ENCODE measurements at regions of chr16 and their contacts with region 1.

Region 1: GRCh38 chr16:11356573-11357331 is 11.5 kb downstream of the RMI2 start:
- DNase-seq: peak; percentile 78
- H3K4me3 Mint-ChIP-seq: no peak overlapping the region
- H3K27ac Mint-ChIP-seq: peak overlapping the region; percentile 28
- H3K4me1 Mint-ChIP-seq: peaks cover 63% of the 10 kb centered on the region
- H3K27me3 Mint-ChIP-seq: no peaks in the 10 kb centered on the region

Region 2: DNA sequence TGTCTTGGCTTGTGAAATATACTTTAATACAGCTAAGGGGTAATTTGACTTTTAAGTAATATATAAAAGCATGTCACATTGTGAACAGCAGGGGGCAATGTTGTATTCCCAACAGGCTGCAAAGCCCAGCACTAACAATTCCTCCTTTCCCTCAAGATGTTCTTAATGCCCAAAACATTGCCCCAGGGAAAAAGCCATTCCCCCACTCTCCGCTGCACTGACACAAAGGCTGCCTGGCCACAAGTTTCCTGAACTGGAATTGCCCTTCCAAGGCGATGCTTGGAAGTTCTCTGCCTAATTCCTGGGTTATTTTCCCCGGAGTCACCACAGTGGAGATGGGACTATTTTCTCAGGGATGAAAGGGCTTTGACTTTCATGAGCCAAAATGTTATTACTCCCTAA is 385.2 kb before region 1 on chr16:
- CTCF ChIA-PET with region 1: interaction called, 16 read pairs
- intact Hi-C with region 1: loop called (anchors 1 kb)
- DNase-seq: peak; percentile 62
- H3K4me3 Mint-ChIP-seq: no peak overlapping the region
- H3K27ac Mint-ChIP-seq: no peak overlapping the region
- H3K4me1 Mint-ChIP-seq: peaks cover 22% of the 10 kb centered on the region
- H3K27me3 Mint-ChIP-seq: no peaks in the 10 kb centered on the region

Region 3: GRCh38 chr16:11224096-11224893 is 132.5 kb before region 1 on chr16:
- CTCF ChIA-PET with region 1: interaction called, 4 read pairs
- intact Hi-C with region 1: loop called (anchors 2 kb)
- DNase-seq: peak; percentile 86
- H3K4me3 Mint-ChIP-seq: peak overlapping the region; percentile 35
- H3K27ac Mint-ChIP-seq: peak overlapping the region; percentile 96
- H3K4me1 Mint-ChIP-seq: peaks cover 51% of the 10 kb centered on the region
- H3K27me3 Mint-ChIP-seq: no peaks in the 10 kb centered on the region

Region 4: GRCh38 chr16:11297492-11298142 is 59.1 kb before region 1 on chr16:
- CTCF ChIA-PET with region 1: interaction called, 3 read pairs
- intact Hi-C with region 1: loop called (anchors 2 kb)
- DNase-seq: peak; percentile 78
- H3K4me3 Mint-ChIP-seq: peak overlapping the region; percentile 49
- H3K27ac Mint-ChIP-seq: peak overlapping the region; percentile 0
- H3K4me1 Mint-ChIP-seq: peaks cover 27% of the 10 kb centered on the region
- H3K27me3 Mint-ChIP-seq: no peaks in the 10 kb centered on the region

Region 5: GRCh38 chr16:11345040-11345862 is 11.5 kb before region 1 on chr16 and contains the start of gene RMI2:
- CTCF ChIA-PET with region 1: interaction called, 9 read pairs
- intact Hi-C with region 1: loop called (anchors 1 kb)
- DNase-seq: peak; percentile 98
- H3K4me3 Mint-ChIP-seq: peak within 1 kb of the TSS; percentile 90
- H3K27ac Mint-ChIP-seq: peak within 1 kb of the TSS; percentile 83
- H3K4me1 Mint-ChIP-seq: peaks cover 46% of the 10 kb centered on the region
- H3K27me3 Mint-ChIP-seq: no peaks in the 10 kb centered on the region
- total RNA-seq, gene RMI2: 82.8 to 86.2 TPM

Region 6: GRCh38 chr16:11386791-11387546 is 30.2 kb after region 1 on chr16:
- CTCF ChIA-PET with region 1: no interaction called
- intact Hi-C with region 1: no loop called
- DNase-seq: no peak
- H3K4me3 Mint-ChIP-seq: no peak overlapping the region
- H3K27ac Mint-ChIP-seq: no peak overlapping the region
- H3K4me1 Mint-ChIP-seq: no peaks in the 10 kb centered on the region
- H3K27me3 Mint-ChIP-seq: no peaks in the 10 kb centered on the region